IMR-90 (cell line): ENCODE measurements at regions of chr6 and their contacts with region 1.

Region 1: DNA sequence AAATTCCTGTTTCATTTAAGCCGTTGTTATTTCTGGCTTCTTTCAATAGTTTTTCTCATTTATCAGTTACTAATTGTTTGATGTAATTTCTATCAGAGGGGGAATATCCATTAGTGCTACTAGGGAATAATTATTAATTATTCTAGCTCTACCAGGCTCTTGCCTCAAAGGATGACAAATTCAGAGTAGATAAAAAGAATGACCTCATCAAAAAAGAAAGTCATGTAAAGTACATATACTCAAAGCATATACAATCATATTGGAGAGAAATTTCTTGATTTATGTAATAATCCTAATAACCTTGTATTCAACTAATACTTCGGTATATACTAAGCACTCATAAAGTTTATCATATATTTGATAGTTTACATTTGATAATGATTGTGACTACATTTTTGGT is 99.7 kb upstream of the FBXL4 start:
- DNase-seq: no peak
- ATAC-seq: no peak
- H3K4me3 ChIP-seq: no peak overlapping the region
- H3K27ac ChIP-seq: no peak overlapping the region
- H3K4me1 ChIP-seq: no peaks in the 10 kb centered on the region
- H3K27me3 ChIP-seq: no peaks in the 10 kb centered on the region
- CTCF ChIP-seq: no peak
- POLR2A ChIP-seq: no peak
- RAD21 ChIP-seq: no peak

Region 2: GRCh38 chr6:100144991-100145390 is 1097.5 kb after region 1 on chr6:
- CTCF ChIA-PET with region 1: no interaction called
- POLR2A ChIA-PET with region 1: no interaction called
- dilution Hi-C with region 1: no loop called
- in situ Hi-C with region 1: no loop called
- intact Hi-C with region 1: loop called (anchors 10 kb)
- DNase-seq: no peak
- ATAC-seq: no peak
- H3K4me3 ChIP-seq: no peak overlapping the region
- H3K27ac ChIP-seq: no peak overlapping the region
- H3K4me1 ChIP-seq: no peaks in the 10 kb centered on the region
- H3K27me3 ChIP-seq: peaks cover 20% of the 10 kb centered on the region
- CTCF ChIP-seq: no peak
- POLR2A ChIP-seq: no peak
- RAD21 ChIP-seq: no peak